ENCODE measurements at regions of chr17 and their contacts with region 1.

Region 1: GRCh38 chr17:68533887-68534694 is 21.9 kb downstream of the PRKAR1A start:
- DNase-seq: no peak
- H3K4me3 Mint-ChIP-seq: no peak overlapping the region
- H3K27ac Mint-ChIP-seq: no peak overlapping the region
- H3K4me1 Mint-ChIP-seq: peaks cover 13% of the 10 kb centered on the region
- H3K27me3 Mint-ChIP-seq: no peaks in the 10 kb centered on the region

Region 2: GRCh38 chr17:68613739-68614298 is 79.7 kb after region 1 on chr17:
- CTCF ChIA-PET with region 1: interaction called, 3 read pairs
- intact Hi-C with region 1: loop called (anchors 1 kb)
- DNase-seq: peak; percentile 47
- H3K4me3 Mint-ChIP-seq: no peak overlapping the region
- H3K27ac Mint-ChIP-seq: no peak overlapping the region
- H3K4me1 Mint-ChIP-seq: no peaks in the 10 kb centered on the region
- H3K27me3 Mint-ChIP-seq: peaks cover 19% of the 10 kb centered on the region

Region 3: DNA sequence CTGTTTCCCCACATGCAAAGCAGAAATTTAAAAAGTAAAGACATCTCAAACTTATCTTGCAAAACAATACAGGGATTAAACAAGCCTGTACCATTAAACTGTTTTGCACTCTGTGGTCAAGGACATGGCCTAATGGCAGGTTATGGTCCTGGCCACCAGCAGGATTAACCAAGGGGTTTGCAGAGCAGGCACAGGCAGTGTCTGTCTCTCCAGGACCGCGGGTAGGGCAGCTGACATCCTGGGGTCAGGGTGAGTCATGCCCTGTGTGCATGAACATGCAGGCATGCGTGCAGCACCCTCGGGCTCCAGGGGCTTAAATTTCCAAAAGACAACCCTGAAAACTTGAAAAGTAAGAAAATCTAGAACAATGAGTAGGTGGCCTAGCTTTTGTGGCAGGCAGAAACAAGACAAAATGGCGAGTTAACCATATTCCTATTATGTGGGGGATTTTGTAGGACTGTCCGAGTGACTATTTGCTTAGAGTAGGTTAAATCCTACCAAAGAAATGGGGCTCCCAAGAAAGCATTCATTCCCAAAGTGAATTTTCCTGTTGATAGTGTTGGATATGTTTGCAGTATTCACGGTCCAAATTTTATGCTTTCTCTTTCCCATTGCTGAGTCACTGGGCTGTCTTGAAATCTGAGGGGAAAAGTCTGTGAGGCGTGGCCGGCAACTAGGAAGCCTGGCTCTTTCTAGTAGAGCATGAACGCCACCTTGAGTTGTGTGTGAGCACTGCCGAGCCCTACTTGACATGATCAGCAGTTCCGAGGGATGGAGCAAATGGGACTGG is 225.4 kb after region 1 on chr17:
- CTCF ChIA-PET with region 1: interaction called, 8 read pairs
- intact Hi-C with region 1: loop called (anchors 2 kb)
- DNase-seq: peak; percentile 85
- H3K4me3 Mint-ChIP-seq: peak overlapping the region; percentile 47
- H3K27ac Mint-ChIP-seq: no peak overlapping the region
- H3K4me1 Mint-ChIP-seq: peaks cover 11% of the 10 kb centered on the region
- H3K27me3 Mint-ChIP-seq: peaks cover 2% of the 10 kb centered on the region